ENCODE measurements at regions of chr1 and their contacts with region 1.

Region 1: GRCh38 chr1:24642481-24643361 is at the start of gene SRRM1:
- DNase-seq: peak; percentile 99 to 100
- ATAC-seq: peak; percentile 98
- H3K4me3 ChIP-seq: peak within 1 kb of the TSS; percentile 86 to 88
- H3K27ac ChIP-seq: peak within 1 kb of the TSS; percentile 85 to 96
- H3K4me1 ChIP-seq: no peaks in the 10 kb centered on the region
- H3K27me3 ChIP-seq: no peaks in the 10 kb centered on the region
- total RNA-seq, gene SRRM1: 111 to 113 TPM

Region 2: GRCh38 chr1:24289937-24290595 is 352.7 kb before region 1 on chr1:
- intact Hi-C with region 1: no loop called
- DNase-seq: peak; percentile 93 to 94
- ATAC-seq: peak; percentile 78
- H3K4me3 ChIP-seq: no peak overlapping the region
- H3K27ac ChIP-seq: no peak overlapping the region
- H3K4me1 ChIP-seq: peaks cover 0 to 2% of the 10 kb centered on the region in 2 donors
- H3K27me3 ChIP-seq: no peaks in the 10 kb centered on the region

Region 3: GRCh38 chr1:24415334-24415909 is 227.3 kb before region 1 on chr1 and contains the start of gene NIPAL3:
- intact Hi-C with region 1: loop called in 1 of 2 experiments (anchors 10 kb)
- DNase-seq: peak; percentile 97 to 99
- ATAC-seq: peak; percentile 95
- H3K4me3 ChIP-seq: peak within 1 kb of the TSS; percentile 49 to 67
- H3K27ac ChIP-seq: no peak within 1 kb of the TSS
- H3K4me1 ChIP-seq: no peaks in the 10 kb centered on the region
- H3K27me3 ChIP-seq: no peaks in the 10 kb centered on the region
- total RNA-seq, gene NIPAL3: 9.8 to 13.0 TPM

Region 4: GRCh38 chr1:24594154-24594553 is 48.6 kb before region 1 on chr1:
- intact Hi-C with region 1: no loop called
- DNase-seq: no peak
- ATAC-seq: no peak
- H3K4me3 ChIP-seq: no peak overlapping the region
- H3K27ac ChIP-seq: no peak overlapping the region
- H3K4me1 ChIP-seq: no peaks in the 10 kb centered on the region
- H3K27me3 ChIP-seq: no peaks in the 10 kb centered on the region

Region 5: GRCh38 chr1:24872061-24872850 is 229.5 kb after region 1 on chr1:
- intact Hi-C with region 1: no loop called
- DNase-seq: peak; percentile 55 to 70
- ATAC-seq: no peak
- H3K4me3 ChIP-seq: no peak overlapping the region
- H3K27ac ChIP-seq: no peak overlapping the region
- H3K4me1 ChIP-seq: no peaks in the 10 kb centered on the region
- H3K27me3 ChIP-seq: no peaks in the 10 kb centered on the region

Region 6: DNA sequence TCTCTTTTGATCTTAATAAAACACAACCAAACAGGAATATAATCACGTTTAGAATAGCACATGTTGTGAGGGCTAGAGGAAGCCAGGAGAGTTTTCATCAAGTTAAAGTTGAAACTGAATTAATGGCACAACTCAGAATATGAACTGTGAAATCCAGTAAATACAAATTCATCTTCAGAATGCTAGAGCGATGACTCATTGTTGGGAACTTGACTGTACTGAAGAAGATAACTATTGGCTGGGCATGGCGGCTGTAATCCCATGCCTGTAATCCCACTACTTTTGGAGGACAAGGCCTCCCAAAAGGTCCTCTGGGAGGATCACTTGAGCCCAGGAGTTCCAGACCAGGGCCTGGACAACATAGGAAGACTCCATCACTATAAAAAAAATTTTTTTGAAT is 580.8 kb after region 1 on chr1:
- intact Hi-C with region 1: loop called in 1 of 2 experiments (anchors 10 kb)
- DNase-seq: no peak
- ATAC-seq: no peak
- H3K4me3 ChIP-seq: no peak overlapping the region
- H3K27ac ChIP-seq: no peak overlapping the region
- H3K4me1 ChIP-seq: no peaks in the 10 kb centered on the region
- H3K27me3 ChIP-seq: no peaks in the 10 kb centered on the region

Measured in aorta (tissue), 5 donors.